Thyroid gland (tissue), 4 donors: ENCODE measurements at regions of chr12 and their contacts with region 1.

Region 1: GRCh38 chr12:12916135-12916944 is 25.0 kb downstream of the GPRC5A start:
- DNase-seq: peak; percentile 82 to 86
- H3K4me3 ChIP-seq: no peak overlapping the region
- H3K27ac ChIP-seq: peak overlapping the region in 2 of 3 donors; percentile 25 to 48
- H3K4me1 ChIP-seq: peaks cover 0 to 12% of the 10 kb centered on the region in 2 donors
- H3K27me3 ChIP-seq: no peaks in the 10 kb centered on the region
- CTCF ChIP-seq: peak; percentile 93 to 98 (median 94)
- POLR2A ChIP-seq: no peak

Region 2: GRCh38 chr12:12736759-12737676 is 179.3 kb before region 1 on chr12:
- intact Hi-C with region 1: no loop called
- DNase-seq: peak; percentile 29 to 44
- H3K4me3 ChIP-seq: no peak overlapping the region
- H3K27ac ChIP-seq: peak overlapping the region in 1 of 3 donors; percentile 24
- H3K4me1 ChIP-seq: peaks cover 4 to 12% of the 10 kb centered on the region in 2 donors
- H3K27me3 ChIP-seq: no peaks in the 10 kb centered on the region
- CTCF ChIP-seq: peak; percentile 22 to 59 (median 46)
- POLR2A ChIP-seq: no peak

Region 3: DNA sequence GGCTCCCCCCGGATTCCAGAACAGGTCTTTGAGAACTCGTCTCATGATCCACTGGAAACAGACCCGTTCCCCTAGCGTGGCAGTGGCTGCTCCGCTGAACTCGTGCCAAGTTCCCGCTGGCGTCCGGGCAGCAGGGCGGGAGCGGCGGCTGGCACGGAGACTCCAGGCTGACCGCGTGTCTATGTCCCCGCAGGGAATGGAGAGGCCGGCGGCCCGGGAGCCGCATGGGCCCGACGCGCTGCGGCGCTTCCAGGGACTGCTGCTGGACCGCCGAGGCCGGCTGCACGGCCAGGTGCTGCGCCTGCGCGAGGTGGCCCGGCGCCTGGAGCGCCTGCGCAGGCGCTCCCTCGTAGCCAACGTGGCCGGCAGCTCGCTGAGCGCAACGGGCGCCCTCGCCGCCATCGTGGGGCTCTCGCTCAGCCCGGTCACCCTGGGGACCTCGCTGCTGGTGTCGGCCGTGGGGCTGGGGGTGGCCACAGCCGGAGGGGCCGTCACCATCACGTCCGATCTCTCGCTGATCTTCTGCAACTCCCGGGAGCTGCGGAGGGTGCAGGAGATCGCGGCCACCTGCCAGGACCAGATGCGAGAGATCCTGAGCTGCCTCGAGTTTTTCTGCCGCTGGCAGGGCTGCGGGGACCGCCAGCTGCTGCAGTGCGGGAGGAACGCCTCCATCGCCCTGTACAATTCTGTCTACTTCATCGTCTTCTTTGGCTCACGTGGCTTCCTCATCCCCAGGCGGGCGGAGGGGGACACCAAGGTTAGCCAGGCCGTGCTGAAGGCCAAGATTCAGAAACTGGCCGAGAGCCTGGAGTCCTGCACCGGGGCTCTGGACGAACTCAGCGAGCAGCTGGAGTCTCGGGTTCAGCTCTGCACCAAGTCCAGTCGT is 129.4 kb before region 1 on chr12:
- intact Hi-C with region 1: loop called (anchors 10 kb)
- DNase-seq: peak; percentile 82 to 88
- H3K4me3 ChIP-seq: peak overlapping the region; percentile 30 to 63 (median 58)
- H3K27ac ChIP-seq: peak overlapping the region; percentile 84 to 96 (median 94)
- H3K4me1 ChIP-seq: peaks cover 11 to 28% of the 10 kb centered on the region in 2 donors
- H3K27me3 ChIP-seq: no peaks in the 10 kb centered on the region
- CTCF ChIP-seq: peak in 3 of 6 experiments; percentile 19 to 49 (median 44)
- POLR2A ChIP-seq: peak; percentile 21 to 93

Region 4: DNA sequence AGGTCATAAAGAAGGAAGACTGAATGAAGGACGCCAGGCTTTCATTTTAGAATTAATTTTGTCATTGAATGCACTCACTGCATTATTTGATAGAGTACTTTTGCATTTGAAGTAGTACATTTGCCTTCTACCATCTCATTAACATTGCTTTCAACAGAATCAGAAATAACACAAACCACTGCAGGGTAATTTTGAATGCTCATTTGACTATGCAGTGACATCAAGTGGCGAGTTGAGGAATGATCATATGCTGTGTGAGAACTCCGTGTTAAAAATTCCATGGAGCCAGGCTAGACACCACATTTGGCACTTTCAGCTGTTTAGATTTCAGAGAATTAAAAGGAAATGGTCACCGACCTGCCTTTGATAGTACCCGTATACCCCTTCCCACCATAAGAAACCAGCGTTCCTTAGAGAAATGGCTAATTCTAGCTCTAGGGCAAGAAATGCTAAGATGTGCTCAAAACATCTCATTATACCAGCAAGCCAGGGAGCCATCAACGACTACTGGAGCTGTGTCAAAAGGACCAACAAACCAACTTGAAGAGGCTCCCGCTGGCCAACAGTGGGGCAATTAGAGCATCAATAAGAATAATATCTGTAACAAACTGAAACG is 67.2 kb after region 1 on chr12:
- intact Hi-C with region 1: loop called (anchors 5 kb)
- DNase-seq: peak in 1 of 2 donors; percentile 30
- H3K4me3 ChIP-seq: no peak overlapping the region
- H3K27ac ChIP-seq: no peak overlapping the region
- H3K4me1 ChIP-seq: peaks cover 14 to 29% of the 10 kb centered on the region in 2 donors
- H3K27me3 ChIP-seq: no peaks in the 10 kb centered on the region
- CTCF ChIP-seq: peak in 5 of 6 experiments; percentile 16 to 73 (median 61)
- POLR2A ChIP-seq: no peak

Region 5: GRCh38 chr12:13094347-13094746 is 178.0 kb after region 1 on chr12:
- intact Hi-C with region 1: loop called (anchors 10 kb)
- DNase-seq: no peak
- H3K4me3 ChIP-seq: no peak overlapping the region
- H3K27ac ChIP-seq: peak overlapping the region in 1 of 3 donors; percentile 21
- H3K4me1 ChIP-seq: peaks cover 24 to 34% of the 10 kb centered on the region in 2 donors
- H3K27me3 ChIP-seq: no peaks in the 10 kb centered on the region
- CTCF ChIP-seq: no peak
- POLR2A ChIP-seq: no peak

Region 6: DNA sequence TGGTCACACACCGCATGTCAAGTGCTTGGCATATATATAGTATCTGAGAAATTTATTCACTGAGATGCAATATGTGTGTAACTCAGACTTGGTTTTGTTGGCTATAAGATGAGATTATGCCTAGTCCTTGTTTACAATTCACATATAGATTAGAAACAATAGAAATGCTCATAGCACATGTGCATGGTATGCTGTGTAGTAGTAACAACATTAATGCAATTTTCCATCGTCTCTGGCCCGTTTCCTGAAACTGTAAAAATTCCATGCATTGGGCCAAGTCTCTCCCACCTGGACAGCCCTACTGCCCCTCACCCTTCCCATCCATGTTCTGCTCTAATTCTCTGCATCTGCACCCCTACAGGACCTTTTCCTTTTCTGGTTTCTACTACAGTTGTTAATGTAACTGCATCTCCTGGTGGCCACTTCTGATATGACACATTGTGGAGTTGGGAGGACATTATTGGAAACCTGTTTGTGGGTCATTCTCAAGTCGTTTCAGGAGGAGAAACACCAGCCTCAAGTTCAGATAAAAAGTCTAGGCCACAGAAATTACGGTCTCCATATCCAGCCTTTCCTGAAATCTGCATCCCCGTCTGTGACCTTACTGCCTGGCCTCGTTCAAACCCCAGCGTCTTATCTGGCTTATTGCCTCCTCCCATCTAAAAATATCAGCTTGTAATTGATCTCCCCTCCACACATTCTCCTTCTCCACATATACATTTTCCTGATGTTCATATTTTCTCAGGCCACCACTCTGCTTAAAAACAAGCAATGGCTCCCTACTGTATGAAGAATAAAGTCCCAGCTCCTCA is 317.7 kb after region 1 on chr12:
- intact Hi-C with region 1: loop called (anchors 10 kb)
- DNase-seq: peak; percentile 59 to 63
- H3K4me3 ChIP-seq: no peak overlapping the region
- H3K27ac ChIP-seq: no peak overlapping the region
- H3K4me1 ChIP-seq: no peaks in the 10 kb centered on the region
- H3K27me3 ChIP-seq: no peaks in the 10 kb centered on the region
- CTCF ChIP-seq: peak; percentile 75 to 96 (median 92)
- POLR2A ChIP-seq: no peak